ENCODE measurements at regions of chr22 and their contacts with region 1.

Region 1: DNA sequence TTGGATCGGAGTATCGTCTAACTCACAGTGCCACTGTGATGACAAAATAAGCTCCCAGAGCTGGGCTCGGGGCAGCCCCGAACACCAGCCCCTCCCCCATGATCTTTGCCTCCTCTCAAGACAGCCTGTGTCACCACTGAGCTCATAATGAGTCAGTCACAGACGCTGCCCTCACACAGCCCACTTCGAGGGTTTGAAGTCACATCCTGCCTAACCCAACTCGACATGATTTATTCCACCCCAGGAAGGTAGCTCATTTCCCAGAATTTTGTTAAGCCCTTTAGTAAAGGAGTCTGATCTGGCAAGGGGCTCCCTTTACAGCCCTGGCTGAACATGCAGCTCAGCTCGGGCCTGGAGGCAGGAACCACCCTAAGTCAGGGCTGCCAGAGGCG is 22.8 kb downstream of the MYH9 start:
- DNase-seq: peak; percentile 75 to 89
- ATAC-seq: peak; percentile 55 to 57
- H3K4me3 ChIP-seq: peak overlapping the region; percentile 17; the same call in 1 of the 3 replicates
- H3K27ac ChIP-seq: peak overlapping the region; percentile 83 to 99
- H3K4me1 ChIP-seq: peaks cover 100% of the 10 kb centered on the region
- CTCF ChIP-seq: no peak
- EP300 ChIP-seq: peak in 1 of 2 experiments; percentile 53; a peak in 2 of 5 replicates
- POLR2A ChIP-seq: no peak
- RAD21 ChIP-seq: 0 out of 5 replicates have a peak, but pooled peaks of 1 of the 2 experiments have one; percentile 15

Region 2: DNA sequence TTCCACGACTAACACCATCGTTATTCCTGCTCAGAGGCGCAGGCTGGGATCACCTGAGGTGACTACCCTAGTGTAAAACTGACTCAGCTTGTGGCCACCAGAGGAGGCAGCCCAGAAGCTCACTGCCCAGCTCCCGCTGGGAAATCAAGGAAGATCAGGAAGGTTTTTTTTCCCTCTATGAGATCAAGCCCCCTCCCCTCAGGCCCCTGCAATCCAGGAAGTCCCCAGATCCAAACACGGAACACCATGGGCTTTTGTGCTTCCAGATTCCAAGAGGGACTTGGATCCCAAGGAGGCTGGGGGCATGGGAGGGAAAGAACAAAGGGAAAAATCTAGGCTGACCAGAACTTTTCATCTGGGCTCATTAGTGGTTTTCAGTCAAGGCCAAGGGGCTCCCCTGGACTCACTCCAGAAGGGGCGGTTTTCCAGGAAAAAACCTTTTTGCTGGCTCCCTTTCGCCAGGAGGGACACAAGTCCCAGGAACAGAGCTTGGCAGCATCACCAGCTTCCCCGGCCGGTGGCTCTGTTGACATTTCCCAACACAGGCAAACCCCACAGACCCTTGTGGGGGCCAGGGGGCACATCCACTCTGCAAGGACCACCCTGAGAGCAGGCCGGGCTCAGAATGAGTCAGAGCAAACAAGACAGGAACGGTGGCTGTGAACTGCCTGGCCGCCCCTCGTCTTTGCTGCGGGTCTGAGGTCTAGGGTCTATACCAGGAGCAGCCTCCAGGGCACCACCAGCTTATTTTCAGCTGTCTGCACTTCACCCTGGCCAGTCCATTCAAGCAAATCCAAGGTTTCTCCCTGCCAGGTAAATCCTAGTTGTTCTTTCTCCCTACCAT is 14.0 kb before region 1 on chr22:
- CTCF ChIA-PET with region 1: interaction called, 5 read pairs
- POLR2A ChIA-PET with region 1: interaction called, 12 read pairs
- DNase-seq: peak; percentile 66 to 79
- ATAC-seq: peak; percentile 55 to 66
- H3K4me3 ChIP-seq: peak overlapping the region; percentile 20; the same call in 2 of the 3 replicates
- H3K27ac ChIP-seq: peak overlapping the region; percentile 98 to 99
- H3K4me1 ChIP-seq: peaks cover 86% of the 10 kb centered on the region
- CTCF ChIP-seq: no peak
- EP300 ChIP-seq: peak; percentile 65 to 85; a peak in 3 of 5 replicates
- POLR2A ChIP-seq: no peak
- RAD21 ChIP-seq: peak in 1 of 2 experiments; percentile 31; a peak in 2 of 5 replicates

Region 3: GRCh38 chr22:36454916-36455570 is 90.0 kb after region 1 on chr22:
- CTCF ChIA-PET with region 1: no interaction called
- POLR2A ChIA-PET with region 1: no interaction called
- DNase-seq: peak; percentile 73 to 94
- ATAC-seq: peak; percentile 88
- H3K4me3 ChIP-seq: peak overlapping the region; percentile 47
- H3K27ac ChIP-seq: peak overlapping the region; percentile 95 to 98
- H3K4me1 ChIP-seq: peaks cover 48% of the 10 kb centered on the region
- CTCF ChIP-seq: peak; percentile 16; the same call in 1 of the 3 replicates
- EP300 ChIP-seq: no peak
- POLR2A ChIP-seq: peak; percentile 38
- RAD21 ChIP-seq: peak in 1 of 2 experiments; percentile 52; a peak in 2 of 5 replicates